PC-3 (cell line): ENCODE measurements at regions of chr12 and their contacts with region 1.

Region 1: GRCh38 chr12:116455540-116456329 is 103.4 kb upstream of the MAP1LC3B2 start:
- DNase-seq: peak; percentile 83
- ATAC-seq: peak; percentile 17
- H3K4me3 ChIP-seq: peak overlapping the region; percentile 21; the same call in 1 of the 2 replicates
- H3K27ac ChIP-seq: peak overlapping the region; percentile 98
- H3K4me1 ChIP-seq: peaks cover 38% of the 10 kb centered on the region
- H3K27me3 ChIP-seq: no peaks in the 10 kb centered on the region
- CTCF ChIP-seq: no peak

Region 2: DNA sequence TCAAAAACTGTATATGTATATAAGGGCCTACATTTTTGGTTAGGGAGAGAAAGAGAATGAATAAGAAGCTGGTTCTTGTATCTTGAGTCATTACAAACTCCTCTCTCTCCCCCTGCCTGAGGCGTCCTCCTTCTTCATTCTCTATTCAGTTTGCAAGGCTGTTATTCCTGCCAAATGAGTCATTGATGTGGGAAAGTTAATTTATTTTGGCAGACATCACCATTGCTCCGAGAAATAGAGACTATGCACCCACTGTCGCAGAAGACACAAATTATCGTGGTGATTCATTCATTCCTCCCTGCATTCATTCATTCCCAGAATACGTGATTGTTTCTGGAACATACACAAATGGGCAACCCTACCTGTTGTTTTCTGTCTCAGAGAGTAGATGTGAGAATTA is 65.7 kb before region 1 on chr12:
- CTCF ChIA-PET with region 1: no interaction called
- POLR2A ChIA-PET with region 1: interaction called, 3 read pairs
- intact Hi-C with region 1: loop called (anchors 1 kb)
- DNase-seq: peak; percentile 100
- ATAC-seq: peak; percentile 84
- H3K4me3 ChIP-seq: no peak overlapping the region; the same call in 1 of the 2 replicates
- H3K27ac ChIP-seq: peak overlapping the region; percentile 95
- H3K4me1 ChIP-seq: peaks cover 37% of the 10 kb centered on the region
- H3K27me3 ChIP-seq: no peaks in the 10 kb centered on the region
- CTCF ChIP-seq: no peak

Region 3: GRCh38 chr12:116406516-116406915 is 49.2 kb before region 1 on chr12:
- CTCF ChIA-PET with region 1: no interaction called
- POLR2A ChIA-PET with region 1: no interaction called
- intact Hi-C with region 1: loop called (anchors 1 kb)
- DNase-seq: peak; percentile 99
- ATAC-seq: peak; percentile 97
- H3K4me3 ChIP-seq: no peak overlapping the region
- H3K27ac ChIP-seq: peak overlapping the region; percentile 74
- H3K4me1 ChIP-seq: peaks cover 25% of the 10 kb centered on the region
- H3K27me3 ChIP-seq: no peaks in the 10 kb centered on the region
- CTCF ChIP-seq: peak; percentile 50

Region 4: DNA sequence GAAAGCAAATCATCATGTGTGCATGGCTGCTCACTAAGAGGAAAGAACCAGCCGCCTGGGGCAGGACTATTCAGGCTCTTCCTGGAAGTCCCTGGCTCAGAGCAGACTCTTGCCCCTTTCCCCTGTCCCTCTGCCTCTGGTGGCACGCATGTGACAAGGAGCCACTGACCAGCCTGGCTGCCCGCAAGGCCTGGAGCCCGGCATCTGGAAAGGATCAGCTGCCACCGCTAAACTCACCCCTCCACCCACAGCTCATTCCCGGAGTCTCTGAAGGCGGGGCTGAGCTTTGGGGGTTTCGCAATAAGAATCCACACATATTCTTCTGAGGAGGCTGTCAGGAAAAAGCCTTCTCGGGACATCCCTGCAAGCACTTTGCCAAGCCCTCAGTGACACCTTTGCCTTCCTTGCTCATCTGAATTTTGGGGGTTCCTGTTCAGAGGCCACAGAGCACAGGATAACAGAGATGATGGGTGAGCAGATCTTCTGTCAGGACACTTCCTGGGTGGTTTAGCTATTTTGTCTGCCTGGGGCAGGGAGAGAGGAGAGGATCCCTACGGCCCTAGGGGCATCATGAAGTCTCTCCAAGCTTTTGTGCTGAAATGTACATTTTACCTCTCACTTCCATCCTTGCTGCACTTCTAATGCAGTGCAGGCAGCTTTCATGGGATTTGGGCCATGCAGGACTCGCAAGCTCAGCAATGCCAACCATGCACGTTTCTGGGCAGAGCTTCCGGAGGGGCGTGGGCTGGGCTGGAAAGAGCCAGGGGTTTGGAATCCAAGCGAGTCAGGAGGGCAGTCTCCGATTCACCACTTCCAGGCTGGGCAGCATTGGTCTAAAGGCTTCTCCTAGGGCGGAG is 21.4 kb before region 1 on chr12:
- CTCF ChIA-PET with region 1: interaction called, 3 read pairs
- POLR2A ChIA-PET with region 1: interaction called, 4 read pairs
- intact Hi-C with region 1: loop called (anchors 1 kb)
- DNase-seq: peak; percentile 95
- ATAC-seq: peak; percentile 87
- H3K4me3 ChIP-seq: peak overlapping the region; percentile 61
- H3K27ac ChIP-seq: peak overlapping the region; percentile 88
- H3K4me1 ChIP-seq: peaks cover 20% of the 10 kb centered on the region
- H3K27me3 ChIP-seq: no peaks in the 10 kb centered on the region
- CTCF ChIP-seq: no peak

Region 5: GRCh38 chr12:116492703-116493324 is 37.1 kb after region 1 on chr12:
- CTCF ChIA-PET with region 1: no interaction called
- POLR2A ChIA-PET with region 1: no interaction called
- intact Hi-C with region 1: loop called (anchors 2 kb)
- DNase-seq: peak; percentile 98
- ATAC-seq: peak; percentile 61
- H3K4me3 ChIP-seq: no peak overlapping the region
- H3K27ac ChIP-seq: peak overlapping the region; percentile 96
- H3K4me1 ChIP-seq: peaks cover 67% of the 10 kb centered on the region
- H3K27me3 ChIP-seq: no peaks in the 10 kb centered on the region
- CTCF ChIP-seq: no peak